Activated naive CD8-positive, alpha-beta T cell treated with anti-CD3 and anti-CD28 coated beads, Interleukin-2, amount 10 ng/mL, durations not matched to agents 7 days and 5 days (primary cell): ENCODE measurements at regions of chr7 and their contacts with region 1.

Region 1: DNA sequence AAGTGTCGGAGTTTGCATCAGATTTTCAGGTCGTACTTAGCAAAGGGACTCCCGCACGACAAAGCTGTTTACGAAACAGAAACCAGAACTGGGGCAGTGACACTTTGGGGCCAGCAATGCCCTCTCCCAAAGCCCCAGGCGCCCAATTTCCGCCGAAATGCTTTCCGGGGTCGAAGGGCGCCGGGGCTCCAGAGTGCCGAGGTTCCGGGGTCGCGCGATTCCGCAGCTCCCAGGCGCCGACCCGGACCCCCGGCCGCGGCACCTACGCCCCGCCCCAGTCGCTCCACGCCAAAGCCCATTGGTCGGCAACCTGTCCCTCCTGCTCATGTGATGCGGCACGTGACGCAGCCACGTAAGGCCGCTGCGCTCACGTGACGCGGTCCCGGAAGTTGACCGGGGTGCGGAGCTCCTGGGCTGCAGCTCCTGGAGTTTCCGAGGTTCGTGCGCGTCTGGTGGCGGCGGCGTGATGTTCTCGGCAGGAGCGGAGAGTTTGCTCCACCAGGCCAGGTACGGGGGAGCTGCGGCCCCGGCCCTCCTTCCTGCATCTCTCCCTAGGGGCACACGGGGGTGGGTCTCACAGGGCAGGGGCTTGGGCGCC is at the start of gene AP5Z1:
- DNase-seq: peak; percentile 95
- ATAC-seq: peak; percentile 91
- H3K4me3 Mint-ChIP-seq: peak within 1 kb of the TSS; percentile 99
- H3K27ac Mint-ChIP-seq: peak within 1 kb of the TSS; percentile 99
- H3K4me1 Mint-ChIP-seq: peaks cover 29% of the 10 kb centered on the region
- H3K27me3 Mint-ChIP-seq: no peaks in the 10 kb centered on the region
- total RNA-seq, gene AP5Z1: 70.1 to 74.6 TPM

Region 2: DNA sequence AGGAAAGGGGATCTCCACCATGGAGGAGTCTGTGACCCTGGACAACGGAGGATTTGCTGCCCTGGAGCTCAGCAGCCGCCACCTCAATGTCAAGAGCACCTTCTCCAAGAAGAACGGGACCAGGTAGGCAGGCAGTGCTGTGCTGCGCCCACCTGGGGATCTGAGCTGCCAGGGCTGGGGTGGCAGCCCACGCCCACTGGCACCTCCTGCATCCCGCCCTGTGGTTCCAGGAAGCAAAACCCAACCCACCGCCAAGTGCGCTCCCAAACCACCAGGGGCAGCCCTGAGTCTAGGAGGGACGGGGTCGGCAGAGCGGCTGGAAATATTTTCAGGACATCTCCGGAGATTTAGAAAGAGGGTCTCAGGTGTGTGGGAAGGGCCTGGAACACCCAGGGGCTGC is 533.6 kb before region 1 on chr7:
- POLR2A ChIA-PET with region 1: no interaction called
- DNase-seq: no peak
- ATAC-seq: no peak
- H3K4me3 Mint-ChIP-seq: no peak overlapping the region
- H3K27ac Mint-ChIP-seq: no peak overlapping the region
- H3K4me1 Mint-ChIP-seq: peaks cover 6% of the 10 kb centered on the region
- H3K27me3 Mint-ChIP-seq: peaks cover 1% of the 10 kb centered on the region

Region 3: DNA sequence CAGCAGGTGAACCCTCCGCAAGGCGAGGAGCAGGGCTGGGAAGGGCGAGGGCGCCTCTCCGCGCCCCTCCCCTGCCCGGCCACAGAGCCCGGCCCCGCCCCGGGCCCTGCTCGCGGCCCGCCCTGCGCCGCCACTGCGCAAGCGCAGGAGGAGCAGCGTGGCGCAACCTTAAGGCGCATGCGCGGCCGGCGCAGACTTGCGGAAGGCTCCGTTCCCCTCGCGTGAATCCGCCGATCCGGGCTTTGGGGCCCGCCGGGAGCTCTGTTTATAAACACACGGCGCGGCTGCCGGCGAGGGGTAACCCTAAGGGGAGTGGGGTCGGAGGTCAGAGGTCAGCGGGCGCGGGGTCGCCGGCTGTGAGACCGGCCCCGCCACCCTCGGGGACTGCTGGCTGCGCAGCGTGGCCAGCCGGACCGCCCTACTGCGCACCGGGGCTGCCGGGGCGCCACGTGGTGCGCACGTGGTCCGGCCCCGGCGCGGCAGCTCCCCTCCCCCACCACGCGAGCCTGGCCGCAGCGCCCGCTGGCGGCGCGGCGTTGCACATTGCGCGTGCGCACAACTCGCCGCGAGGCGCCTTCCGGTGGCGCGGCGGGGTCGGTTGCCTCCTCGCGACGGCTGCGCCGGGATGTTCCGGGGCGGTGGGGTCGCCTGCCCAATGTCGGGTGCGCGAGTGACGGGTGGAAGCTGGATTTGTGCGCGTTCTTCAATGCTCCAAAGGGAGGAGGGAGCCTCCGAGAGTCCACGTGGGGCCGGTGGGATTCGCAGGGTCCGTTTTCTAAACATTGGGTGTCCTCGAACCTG is 133.5 kb before region 1 on chr7:
- POLR2A ChIA-PET with region 1: interaction called, 26 read pairs
- DNase-seq: peak; percentile 100
- ATAC-seq: peak; percentile 86
- H3K4me3 Mint-ChIP-seq: peak overlapping the region; percentile 91
- H3K27ac Mint-ChIP-seq: peak overlapping the region; percentile 95
- H3K4me1 Mint-ChIP-seq: peaks cover 14% of the 10 kb centered on the region
- H3K27me3 Mint-ChIP-seq: peaks cover 4% of the 10 kb centered on the region

Region 4: DNA sequence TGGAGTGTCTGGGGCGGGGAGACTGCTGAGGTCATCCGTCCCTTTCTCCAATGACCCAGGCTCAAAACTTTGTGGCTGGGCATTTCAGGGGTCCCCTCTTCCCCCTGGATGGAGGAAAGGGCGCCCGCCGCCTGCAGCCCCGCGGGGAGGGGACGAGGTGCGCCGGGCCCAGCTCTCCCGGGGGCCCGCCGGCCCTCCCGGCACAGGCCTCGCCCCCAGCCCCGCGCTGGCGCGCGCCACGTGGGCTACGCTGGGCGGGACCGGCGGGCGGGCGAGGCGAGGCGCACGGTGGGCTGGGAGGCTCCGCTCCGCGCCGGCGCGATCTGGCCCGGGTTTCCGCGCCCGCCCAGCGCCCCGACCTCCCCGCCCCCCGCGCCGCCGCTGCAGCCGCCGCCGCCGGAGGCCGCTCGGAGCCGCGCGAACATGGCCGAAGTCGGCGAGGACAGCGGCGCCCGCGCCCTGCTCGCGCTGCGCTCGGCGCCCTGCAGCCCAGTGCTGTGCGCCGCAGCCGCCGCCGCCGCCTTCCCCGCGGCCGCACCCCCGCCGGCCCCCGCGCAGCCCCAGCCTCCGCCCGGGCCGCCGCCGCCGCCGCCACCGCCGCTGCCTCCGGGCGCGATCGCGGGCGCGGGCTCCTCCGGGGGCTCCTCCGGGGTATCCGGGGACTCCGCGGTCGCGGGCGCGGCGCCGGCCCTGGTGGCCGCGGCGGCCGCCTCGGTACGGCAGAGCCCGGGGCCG is 93.3 kb before region 1 on chr7 and contains the start of gene FOXK1:
- POLR2A ChIA-PET with region 1: interaction called, 10 read pairs
- DNase-seq: peak; percentile 92
- ATAC-seq: peak; percentile 79
- H3K4me3 Mint-ChIP-seq: peak within 1 kb of the TSS; percentile 91
- H3K27ac Mint-ChIP-seq: peak within 1 kb of the TSS; percentile 94
- H3K4me1 Mint-ChIP-seq: peaks cover 18% of the 10 kb centered on the region
- H3K27me3 Mint-ChIP-seq: no peaks in the 10 kb centered on the region
- total RNA-seq, gene FOXK1: 41.7 to 42.1 TPM

Region 5: GRCh38 chr7:4725014-4725849 is 50.1 kb before region 1 on chr7:
- POLR2A ChIA-PET with region 1: interaction called, 23 read pairs
- DNase-seq: peak; percentile 72
- ATAC-seq: peak; percentile 81
- H3K4me3 Mint-ChIP-seq: peak overlapping the region; percentile 91
- H3K27ac Mint-ChIP-seq: peak overlapping the region; percentile 92
- H3K4me1 Mint-ChIP-seq: peaks cover 26% of the 10 kb centered on the region
- H3K27me3 Mint-ChIP-seq: no peaks in the 10 kb centered on the region

Region 6: GRCh38 chr7:4791738-4792536 is 16.6 kb after region 1 on chr7:
- POLR2A ChIA-PET with region 1: interaction called, 43 read pairs
- DNase-seq: peak; percentile 88
- ATAC-seq: peak; percentile 75
- H3K4me3 Mint-ChIP-seq: no peak overlapping the region
- H3K27ac Mint-ChIP-seq: no peak overlapping the region
- H3K4me1 Mint-ChIP-seq: peaks cover 11% of the 10 kb centered on the region
- H3K27me3 Mint-ChIP-seq: no peaks in the 10 kb centered on the region